HepG2 (cell line): ENCODE measurements at regions of chr2 and their contacts with region 1.

Region 1: DNA sequence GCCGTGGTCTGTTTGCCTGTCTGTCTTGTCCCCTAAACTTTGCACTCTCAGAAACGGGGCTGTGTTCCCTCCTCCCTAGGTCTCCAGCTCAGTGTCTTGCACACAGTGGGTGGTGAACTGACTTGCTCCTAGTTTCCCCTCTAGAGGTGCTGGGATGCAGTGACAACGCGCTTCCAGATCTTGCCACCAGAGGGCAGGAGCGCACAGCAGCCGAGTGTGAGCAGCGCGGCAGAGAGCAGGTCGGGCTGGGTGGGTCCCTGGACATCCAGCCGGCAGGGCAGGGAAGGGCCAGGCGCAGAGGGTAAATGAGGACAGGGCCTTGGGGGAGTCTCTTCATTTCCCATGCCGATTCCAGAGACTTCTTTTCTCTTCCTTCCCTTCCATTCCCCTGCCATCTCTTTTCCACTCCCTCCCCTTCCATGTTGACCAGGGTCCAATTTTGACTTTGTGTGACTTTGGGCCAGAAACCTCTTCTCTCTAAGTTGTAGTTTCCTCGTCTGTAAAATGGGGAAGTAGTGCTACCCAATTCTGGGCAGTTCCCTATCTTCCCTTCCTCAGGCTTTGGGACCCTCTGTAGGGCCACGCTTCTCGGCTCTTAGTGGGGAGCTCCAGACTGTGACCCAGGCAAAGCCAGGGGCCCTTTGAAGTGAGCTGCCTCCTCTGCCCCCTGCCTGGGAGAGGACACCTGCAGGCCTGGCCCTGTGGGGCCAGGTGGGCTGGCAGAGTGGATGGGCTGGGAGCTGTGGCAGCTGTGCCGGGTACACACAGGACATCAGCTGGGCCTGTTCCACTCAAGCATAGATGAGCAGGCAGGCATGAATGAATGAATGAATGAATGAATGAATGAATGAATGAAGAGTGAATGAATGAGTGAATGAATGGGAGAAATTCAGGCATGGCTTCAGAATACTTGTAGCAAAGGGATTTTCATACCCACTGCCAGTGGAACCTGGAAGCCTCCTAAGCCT is 43.3 kb upstream of the TAF1B start:
- DNase-seq: peak; percentile 77
- ATAC-seq: peak; percentile 78
- H3K4me3 ChIP-seq: peak overlapping the region; percentile 32 to 70 (median 42)
- H3K27ac ChIP-seq: no peak overlapping the region
- H3K4me1 ChIP-seq: peaks cover 78% of the 10 kb centered on the region
- H3K27me3 ChIP-seq: peaks cover 5 to 45% of the 10 kb centered on the region in 2 experiments; a peak in 4 of 5 replicates
- CTCF ChIP-seq: peak; percentile 100
- EP300 ChIP-seq: no peak; a peak in 1 of 4 replicates
- POLR2A ChIP-seq: no peak
- RAD21 ChIP-seq: peak; percentile 90

Region 2: DNA sequence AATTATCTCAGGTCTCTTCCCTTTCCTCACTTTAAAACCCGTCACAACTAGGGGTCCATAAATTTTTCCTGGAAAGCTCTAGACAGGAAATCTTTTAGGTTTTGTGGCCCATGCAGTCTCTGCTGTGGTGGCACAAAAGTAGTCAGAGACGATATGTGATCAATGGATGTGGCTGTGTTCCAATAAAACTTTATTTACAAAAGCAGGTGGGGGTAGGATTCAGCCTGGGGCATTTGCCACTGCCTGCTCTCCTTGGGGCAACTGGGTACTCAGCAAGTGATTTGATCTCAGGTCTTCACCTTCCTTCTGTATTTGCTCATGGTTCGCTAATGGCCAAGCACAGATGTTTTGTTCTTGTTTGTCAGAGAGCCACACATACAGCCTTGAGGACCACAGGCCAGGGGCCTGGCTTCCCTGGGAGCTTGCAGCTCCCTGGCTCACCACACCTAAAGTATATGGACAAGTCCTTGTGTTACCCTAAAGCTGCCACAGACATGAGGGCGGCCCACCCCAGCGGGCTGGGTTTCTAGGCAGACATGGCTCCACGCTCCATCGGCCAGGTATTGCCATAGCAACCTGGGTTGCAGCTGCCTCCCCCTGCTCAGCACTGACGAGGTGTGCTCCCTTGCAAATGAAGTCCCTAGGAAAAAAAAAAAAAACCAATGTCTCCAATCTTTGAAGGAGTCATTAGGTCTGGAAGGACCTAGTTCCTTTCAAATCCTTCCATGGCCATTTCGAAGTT is 79.4 kb before region 1 on chr2:
- CTCF ChIA-PET with region 1: no interaction called
- POLR2A ChIA-PET with region 1: no interaction called
- in situ Hi-C with region 1: no loop called
- intact Hi-C with region 1: no loop called
- DNase-seq: no peak
- ATAC-seq: no peak
- H3K4me3 ChIP-seq: no peak overlapping the region
- H3K27ac ChIP-seq: no peak overlapping the region
- H3K4me1 ChIP-seq: peaks cover 7% of the 10 kb centered on the region; the same call in 1 of the 2 replicates
- H3K27me3 ChIP-seq: peaks cover 3 to 30% of the 10 kb centered on the region in 2 experiments; a peak in 4 of 5 replicates
- CTCF ChIP-seq: no peak
- EP300 ChIP-seq: no peak
- POLR2A ChIP-seq: no peak
- RAD21 ChIP-seq: no peak

Region 3: GRCh38 chr2:9770308-9771100 is 29.4 kb before region 1 on chr2:
- CTCF ChIA-PET with region 1: interaction called, 3 read pairs
- POLR2A ChIA-PET with region 1: no interaction called
- in situ Hi-C with region 1: no loop called
- intact Hi-C with region 1: loop called (anchors 1 kb)
- DNase-seq: peak; percentile 76
- ATAC-seq: peak; percentile 63
- H3K4me3 ChIP-seq: peak overlapping the region in 1 of 3 experiments; percentile 20; a peak in 1 of 6 replicates
- H3K27ac ChIP-seq: no peak overlapping the region
- H3K4me1 ChIP-seq: peaks cover 70% of the 10 kb centered on the region
- H3K27me3 ChIP-seq: peaks cover 9 to 71% of the 10 kb centered on the region in 2 experiments
- CTCF ChIP-seq: peak; percentile 82
- EP300 ChIP-seq: no peak
- POLR2A ChIP-seq: no peak
- RAD21 ChIP-seq: no peak; the same call in 1 of the 2 replicates

Region 4: GRCh38 chr2:9789371-9789968 is 10.5 kb before region 1 on chr2:
- CTCF ChIA-PET with region 1: no interaction called
- POLR2A ChIA-PET with region 1: no interaction called
- in situ Hi-C with region 1: no loop called
- intact Hi-C with region 1: no loop called
- DNase-seq: no peak
- ATAC-seq: peak; percentile 49
- H3K4me3 ChIP-seq: no peak overlapping the region
- H3K27ac ChIP-seq: no peak overlapping the region
- H3K4me1 ChIP-seq: peaks cover 11% of the 10 kb centered on the region
- H3K27me3 ChIP-seq: peaks cover 0 to 20% of the 10 kb centered on the region in 2 experiments; a peak in 4 of 5 replicates
- CTCF ChIP-seq: no peak
- EP300 ChIP-seq: no peak
- POLR2A ChIP-seq: no peak
- RAD21 ChIP-seq: no peak

Region 5: DNA sequence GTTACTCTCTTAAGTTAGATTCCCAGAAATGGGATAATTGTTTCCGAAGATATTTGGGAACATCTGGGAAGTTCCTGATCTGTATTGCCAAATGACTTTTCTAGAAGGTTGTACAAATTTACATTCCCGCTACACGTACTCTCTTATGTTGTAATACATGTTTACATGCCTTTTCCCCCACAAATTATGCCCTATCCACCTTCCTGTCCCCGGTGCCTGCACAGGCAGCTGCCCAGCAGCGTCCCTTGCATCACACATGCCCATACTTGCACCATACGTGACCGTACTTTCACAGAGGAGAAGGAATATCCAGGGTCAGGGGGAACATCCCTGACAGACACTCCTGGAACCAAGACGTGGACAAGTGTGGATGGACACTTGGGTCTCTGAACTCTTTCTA is 219.2 kb after region 1 on chr2:
- CTCF ChIA-PET with region 1: no interaction called
- POLR2A ChIA-PET with region 1: no interaction called
- in situ Hi-C with region 1: no loop called
- intact Hi-C with region 1: loop called (anchors 2 kb)
- DNase-seq: peak; percentile 37
- ATAC-seq: peak; percentile 20; the same call in 2 of the 3 replicates
- H3K4me3 ChIP-seq: no peak overlapping the region
- H3K27ac ChIP-seq: no peak overlapping the region
- H3K4me1 ChIP-seq: peaks cover 32% of the 10 kb centered on the region
- H3K27me3 ChIP-seq: peaks cover 11 to 54% of the 10 kb centered on the region in 2 experiments; a peak in 4 of 5 replicates
- CTCF ChIP-seq: no peak
- EP300 ChIP-seq: peak in 1 of 2 experiments; percentile 24; a peak in 1 of 4 replicates
- POLR2A ChIP-seq: no peak
- RAD21 ChIP-seq: no peak

Region 6: GRCh38 chr2:10448208-10448645 is 648.3 kb after region 1 on chr2 and contains the start of gene ODC1:
- CTCF ChIA-PET with region 1: no interaction called
- POLR2A ChIA-PET with region 1: no interaction called
- in situ Hi-C with region 1: loop called (anchors 25 kb)
- intact Hi-C with region 1: no loop called
- DNase-seq: peak; percentile 88
- ATAC-seq: peak; percentile 62
- H3K4me3 ChIP-seq: peak within 1 kb of the TSS; percentile 58 to 75 (median 70)
- H3K27ac ChIP-seq: peak within 1 kb of the TSS; percentile 90
- H3K4me1 ChIP-seq: peaks cover 67% of the 10 kb centered on the region
- H3K27me3 ChIP-seq: no peaks in the 10 kb centered on the region
- CTCF ChIP-seq: no peak
- EP300 ChIP-seq: no peak
- POLR2A ChIP-seq: no peak; a peak in 1 of 4 replicates
- RAD21 ChIP-seq: peak; percentile 49; the same call in 1 of the 2 replicates
- total RNA-seq, gene ODC1: 371 and 422 TPM in 2 replicates